ENCODE measurements at regions of chr10 and their contacts with region 1.

Region 1: GRCh38 chr10:50480054-50481007 is 143.4 kb downstream of the SGMS1 start:
- DNase-seq: no peak
- H3K4me3 ChIP-seq: no peak overlapping the region
- H3K27ac ChIP-seq: no peak overlapping the region
- H3K4me1 ChIP-seq: no peaks in the 10 kb centered on the region
- H3K27me3 ChIP-seq: no peaks in the 10 kb centered on the region
- CTCF ChIP-seq: no peak
- EP300 ChIP-seq: no peak
- POLR2A ChIP-seq: no peak

Region 2: DNA sequence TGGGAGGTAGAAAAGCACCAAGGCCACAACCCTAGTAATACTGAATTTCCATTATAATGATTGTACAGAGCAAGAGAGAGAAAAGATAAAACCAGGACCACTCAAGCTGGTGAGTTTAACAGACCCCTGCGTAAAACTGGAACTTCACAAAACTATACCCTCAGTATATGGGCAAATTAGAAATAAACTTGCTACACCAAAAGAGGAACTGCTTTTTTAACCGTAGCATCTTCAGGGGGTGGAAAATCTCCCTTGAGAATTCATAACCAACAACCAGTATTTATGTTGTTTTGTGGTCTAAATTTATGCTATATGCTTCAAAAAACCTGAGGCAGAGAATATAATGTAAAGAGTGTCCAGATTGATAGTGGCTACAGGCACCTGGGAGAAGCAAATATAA is 27.7 kb before region 1 on chr10:
- in situ Hi-C with region 1: no loop called
- intact Hi-C with region 1: loop called (anchors 2 kb)
- DNase-seq: no peak
- H3K4me3 ChIP-seq: no peak overlapping the region
- H3K27ac ChIP-seq: no peak overlapping the region
- H3K4me1 ChIP-seq: peaks cover 0 to 4% (median 0%) of the 10 kb centered on the region in 4 donors
- H3K27me3 ChIP-seq: no peaks in the 10 kb centered on the region
- CTCF ChIP-seq: no peak
- EP300 ChIP-seq: no peak
- POLR2A ChIP-seq: no peak